Ascending aorta (tissue), 2 donors: ENCODE measurements at regions of chr21 and their contacts with region 1.

Region 1: DNA sequence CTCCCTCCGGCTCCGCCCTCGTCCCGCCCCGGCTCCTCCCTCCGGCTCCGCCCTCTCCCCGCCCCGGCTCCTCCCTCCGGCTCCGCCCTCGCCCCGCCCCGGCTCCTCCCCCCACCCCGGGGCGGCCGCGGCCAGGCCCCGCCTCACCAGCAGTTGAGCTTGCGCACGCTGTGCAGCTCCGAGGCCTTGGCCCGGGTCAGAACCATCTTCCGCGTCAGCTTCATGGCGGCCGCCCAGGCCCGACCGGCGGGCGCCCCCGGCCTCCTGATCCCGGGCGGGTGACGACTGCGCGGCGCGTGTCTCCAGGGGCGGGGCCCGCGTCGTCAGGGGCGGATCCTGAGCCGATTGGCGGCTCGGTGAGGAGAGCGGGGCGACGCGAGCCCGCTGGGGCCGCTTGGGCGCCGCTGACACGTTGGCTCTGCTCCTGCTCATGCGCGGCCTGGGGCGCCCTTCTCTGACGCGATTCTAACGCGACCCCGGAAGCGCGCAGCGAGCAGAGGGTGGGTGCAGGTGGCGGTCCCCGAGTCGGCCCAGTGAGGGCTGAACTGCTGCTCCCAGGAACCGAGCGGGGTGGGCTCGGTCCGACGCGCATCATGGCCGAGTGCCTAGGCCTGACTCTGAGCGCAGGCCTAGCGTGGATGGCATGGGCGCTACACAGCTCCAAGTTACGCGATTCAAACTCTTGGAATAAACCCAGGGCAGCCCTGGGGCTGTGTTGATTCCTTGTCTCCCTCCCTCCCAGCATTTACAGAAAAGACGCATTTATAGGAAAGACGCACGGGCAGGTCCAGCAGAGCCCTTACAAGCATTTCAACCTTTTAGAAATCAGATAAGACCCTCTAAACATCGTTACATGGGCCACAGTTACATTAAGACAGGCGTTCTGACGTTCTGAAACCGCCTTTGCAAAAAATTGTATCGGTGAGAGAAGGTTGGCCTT is at the start of gene CFAP410:
- DNase-seq: peak; percentile 74 to 97
- H3K4me3 ChIP-seq: peak within 1 kb of the TSS; percentile 69 to 92
- H3K27ac ChIP-seq: peak within 1 kb of the TSS; percentile 92 to 99
- H3K4me1 ChIP-seq: peaks cover 4 to 12% of the 10 kb centered on the region in 2 donors
- H3K27me3 ChIP-seq: no peaks in the 10 kb centered on the region
- CTCF ChIP-seq: no peak
- total RNA-seq, gene CFAP410: 68.5 TPM

Region 2: DNA sequence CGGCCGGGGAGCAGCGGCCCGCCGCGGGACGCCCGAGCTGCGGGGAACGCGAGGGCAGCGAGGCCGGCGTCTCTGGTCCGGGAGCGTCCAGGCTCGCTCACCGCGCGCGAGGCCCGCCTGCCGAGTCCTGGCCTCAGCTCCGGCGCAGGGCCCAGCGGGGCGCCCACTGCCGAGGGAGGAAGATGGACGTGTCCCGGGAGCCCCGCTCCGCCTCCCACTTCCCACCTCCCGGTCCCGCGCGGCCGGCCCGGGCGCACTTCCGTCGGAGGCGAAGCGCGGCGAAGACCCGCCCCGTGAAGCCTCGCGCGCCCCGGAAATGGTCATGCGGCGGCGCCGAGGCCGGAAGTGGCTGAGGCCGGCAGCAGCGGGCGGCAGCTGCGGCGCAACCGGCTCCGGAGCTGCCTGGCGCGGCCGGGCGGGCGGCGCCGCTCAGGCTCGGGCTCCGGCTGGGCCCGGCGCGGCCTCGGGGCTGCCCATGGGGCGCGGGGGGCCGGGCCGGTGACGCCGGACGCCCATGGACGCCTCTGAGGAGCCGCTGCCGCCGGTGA is 327.2 kb before region 1 on chr21 and contains the start of gene TRAPPC10:
- intact Hi-C with region 1: loop called (anchors 5 kb)
- DNase-seq: peak; percentile 25 to 91
- H3K4me3 ChIP-seq: peak within 1 kb of the TSS; percentile 88 to 92
- H3K27ac ChIP-seq: peak within 1 kb of the TSS; percentile 94 to 96
- H3K4me1 ChIP-seq: peaks cover 0 to 17% of the 10 kb centered on the region in 2 donors
- H3K27me3 ChIP-seq: no peaks in the 10 kb centered on the region
- CTCF ChIP-seq: no peak
- total RNA-seq, gene TRAPPC10: 7.9 TPM

Region 3: DNA sequence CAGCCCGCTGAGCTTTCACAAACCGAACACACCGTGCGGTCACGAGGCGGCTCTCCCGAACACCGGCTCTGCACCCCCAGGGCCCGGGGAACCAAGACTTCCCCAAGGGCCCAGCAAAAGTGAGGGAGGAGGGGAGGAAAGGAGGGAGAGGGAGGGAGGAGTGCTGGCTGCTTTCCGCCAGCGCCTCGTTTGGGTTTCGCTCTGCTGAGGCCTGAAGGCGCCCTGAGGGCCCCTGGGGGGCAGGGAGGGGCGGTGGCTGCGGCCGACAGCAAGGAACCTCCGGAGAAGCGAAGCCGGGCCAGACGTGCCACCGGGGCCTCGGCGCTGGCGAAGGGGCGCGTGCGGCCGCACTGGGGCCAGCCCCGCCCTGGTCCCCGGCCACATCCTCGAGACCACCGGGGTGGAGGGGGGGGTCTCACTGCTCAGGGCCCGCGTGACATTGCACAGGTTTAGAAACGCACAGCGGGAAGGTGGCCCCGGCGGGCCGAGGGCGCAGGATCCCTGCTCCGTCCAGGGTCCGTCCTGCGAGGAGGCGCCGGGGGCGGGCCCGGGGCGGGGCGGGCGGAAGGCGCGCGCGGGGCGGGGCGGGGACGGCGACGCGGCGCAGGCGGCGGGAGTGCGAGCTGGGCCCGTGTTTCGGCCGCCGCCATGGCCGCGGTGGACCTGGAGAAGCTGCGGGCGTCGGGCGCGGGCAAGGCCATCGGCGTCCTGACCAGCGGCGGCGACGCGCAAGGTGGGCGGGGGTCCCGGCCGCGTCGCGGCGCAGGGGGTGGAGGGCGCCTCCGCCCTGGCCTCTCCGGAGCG is 39.6 kb before region 1 on chr21 and contains the start of gene PFKL:
- intact Hi-C with region 1: loop called (anchors 2 kb)
- DNase-seq: peak in 1 of 2 donors; percentile 81
- H3K4me3 ChIP-seq: peak within 1 kb of the TSS; percentile 96 to 99
- H3K27ac ChIP-seq: peak within 1 kb of the TSS; percentile 89 to 92
- H3K4me1 ChIP-seq: peaks cover 5 to 33% of the 10 kb centered on the region in 2 donors
- H3K27me3 ChIP-seq: no peaks in the 10 kb centered on the region
- CTCF ChIP-seq: no peak
- total RNA-seq, gene PFKL: 153 TPM

Region 4: GRCh38 chr21:44454747-44455523 is 115.7 kb after region 1 on chr21 and contains the start of gene LRRC3:
- intact Hi-C with region 1: loop called (anchors 5 kb)
- DNase-seq: peak; percentile 25 to 86
- H3K4me3 ChIP-seq: peak within 1 kb of the TSS; percentile 73 to 85
- H3K27ac ChIP-seq: no peak within 1 kb of the TSS
- H3K4me1 ChIP-seq: peaks cover 0 to 2% of the 10 kb centered on the region in 2 donors
- H3K27me3 ChIP-seq: no peaks in the 10 kb centered on the region
- CTCF ChIP-seq: no peak
- total RNA-seq, gene LRRC3: 2.2 TPM

Region 5: GRCh38 chr21:45643021-45643980 is 1304.1 kb after region 1 on chr21 and contains the start of gene PCBP3:
- intact Hi-C with region 1: loop called (anchors 5 kb)
- DNase-seq: peak; percentile 84 to 98
- H3K4me3 ChIP-seq: peak within 1 kb of the TSS; percentile 67
- H3K27ac ChIP-seq: peak within 1 kb of the TSS in 1 of 2 donors; percentile 49
- H3K4me1 ChIP-seq: peaks cover 2 to 3% of the 10 kb centered on the region in 2 donors
- H3K27me3 ChIP-seq: peaks cover 4% of the 10 kb centered on the region
- CTCF ChIP-seq: no peak
- total RNA-seq, gene PCBP3: not detected